ENCODE measurements at regions of chr12 and their contacts with region 1.

Region 1: GRCh38 chr12:113048716-113049127 is 7.8 kb upstream of the DTX1 start:
- DNase-seq: peak in 41 of 42 donors; percentile 29 to 91 (median 73)

Region 2: GRCh38 chr12:112599871-112600270 is 448.9 kb before region 1 on chr12:
- intact Hi-C with region 1: no loop called
- DNase-seq: peak in 33 of 42 donors; percentile 9 to 82 (median 35)

Region 3: DNA sequence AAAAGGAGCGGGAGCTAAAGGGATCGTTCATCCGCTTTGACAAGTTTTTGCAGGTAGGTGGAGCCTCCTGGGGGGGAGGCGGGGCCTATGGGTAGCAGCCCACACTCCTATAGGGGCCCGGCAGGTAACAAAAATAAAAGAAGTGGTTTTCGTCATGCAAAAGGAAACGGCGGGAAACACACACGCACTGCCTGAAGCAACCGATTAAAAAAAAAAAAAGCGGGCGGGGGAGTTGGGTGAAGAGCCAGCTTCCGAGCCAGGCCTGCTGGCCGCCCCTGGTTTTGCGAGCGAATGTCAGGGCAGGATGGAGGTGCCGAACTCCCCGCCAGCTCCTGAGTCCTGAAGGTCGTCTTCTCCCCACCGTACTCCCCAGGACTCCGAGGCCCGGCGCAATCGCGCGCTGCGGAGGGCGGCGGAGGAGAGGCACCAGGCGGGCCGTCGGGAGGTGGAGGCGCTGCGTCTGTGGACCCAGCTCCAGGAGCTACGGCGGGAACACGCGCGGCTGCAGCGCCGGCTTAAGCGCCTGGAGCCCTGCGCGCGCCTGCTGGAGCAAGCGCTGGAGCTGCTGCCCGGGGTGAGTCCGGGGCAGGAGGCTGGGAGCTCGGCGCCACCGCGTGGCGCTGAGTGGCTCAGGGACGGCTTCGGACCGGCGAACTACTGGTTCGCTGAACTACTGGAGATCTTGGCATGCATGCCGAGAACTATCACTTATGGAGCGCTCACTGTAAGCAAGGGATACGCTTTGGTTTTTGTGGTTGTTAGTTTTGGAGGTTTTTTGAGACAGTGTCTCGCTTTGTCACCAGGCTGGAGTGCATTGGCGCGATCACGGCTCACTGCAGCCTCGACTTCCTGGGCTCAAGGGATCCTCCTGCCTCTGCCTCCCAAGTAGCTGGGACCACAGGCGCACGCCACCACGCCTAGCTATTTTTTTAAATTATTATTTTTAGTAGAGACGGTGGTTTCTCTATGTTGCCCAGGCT is 104.4 kb after region 1 on chr12:
- intact Hi-C with region 1: loop called (anchors 2 kb)
- DNase-seq: peak; percentile 61 to 90 (median 81)

Region 4: DNA sequence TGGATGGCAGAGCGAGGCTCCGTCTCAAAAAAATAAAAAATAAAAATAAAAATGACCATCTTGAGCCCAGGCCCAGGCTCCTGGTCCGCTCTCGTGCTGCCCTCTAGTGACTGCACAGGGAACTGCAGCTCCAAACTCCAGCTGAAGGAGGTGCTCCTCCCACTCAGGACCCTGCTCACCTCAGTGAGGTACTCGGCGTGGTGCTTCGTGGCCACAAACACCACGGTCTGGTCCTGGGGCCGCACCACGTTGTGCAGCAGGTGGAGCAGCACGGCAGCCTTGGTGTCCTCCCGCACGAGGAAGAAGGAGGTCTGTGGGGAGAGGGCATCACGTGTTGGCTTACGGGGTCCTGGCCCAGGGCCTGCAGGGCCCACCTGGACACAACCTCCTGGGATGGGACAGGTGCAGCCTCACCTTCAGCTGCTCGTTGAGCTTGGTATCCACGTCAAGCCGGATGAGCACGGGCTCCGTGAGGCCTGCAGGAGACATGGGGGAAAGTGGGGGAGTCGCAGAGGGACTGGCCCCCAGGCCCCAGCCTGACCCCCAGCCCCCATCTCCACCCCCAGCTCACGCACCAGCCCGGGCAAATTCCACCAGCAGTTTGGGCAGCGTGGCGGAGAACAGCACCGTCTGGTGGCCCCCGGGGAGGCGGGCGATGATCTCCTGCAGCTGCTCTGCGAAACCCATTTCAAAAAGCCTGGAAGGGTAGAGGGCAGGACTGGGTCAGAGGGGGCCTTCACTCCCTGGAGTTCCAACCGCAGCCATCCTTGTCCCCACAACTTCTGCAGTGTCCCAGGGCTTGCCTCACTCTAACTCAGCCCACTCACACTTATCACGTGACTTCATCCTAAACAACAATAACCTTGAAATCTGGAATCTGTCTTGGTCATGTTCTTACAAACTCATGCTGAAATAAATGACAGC is 126.0 kb after region 1 on chr12:
- intact Hi-C with region 1: loop called (anchors 5 kb)
- DNase-seq: peak; percentile 19 to 94 (median 83)

Region 5: DNA sequence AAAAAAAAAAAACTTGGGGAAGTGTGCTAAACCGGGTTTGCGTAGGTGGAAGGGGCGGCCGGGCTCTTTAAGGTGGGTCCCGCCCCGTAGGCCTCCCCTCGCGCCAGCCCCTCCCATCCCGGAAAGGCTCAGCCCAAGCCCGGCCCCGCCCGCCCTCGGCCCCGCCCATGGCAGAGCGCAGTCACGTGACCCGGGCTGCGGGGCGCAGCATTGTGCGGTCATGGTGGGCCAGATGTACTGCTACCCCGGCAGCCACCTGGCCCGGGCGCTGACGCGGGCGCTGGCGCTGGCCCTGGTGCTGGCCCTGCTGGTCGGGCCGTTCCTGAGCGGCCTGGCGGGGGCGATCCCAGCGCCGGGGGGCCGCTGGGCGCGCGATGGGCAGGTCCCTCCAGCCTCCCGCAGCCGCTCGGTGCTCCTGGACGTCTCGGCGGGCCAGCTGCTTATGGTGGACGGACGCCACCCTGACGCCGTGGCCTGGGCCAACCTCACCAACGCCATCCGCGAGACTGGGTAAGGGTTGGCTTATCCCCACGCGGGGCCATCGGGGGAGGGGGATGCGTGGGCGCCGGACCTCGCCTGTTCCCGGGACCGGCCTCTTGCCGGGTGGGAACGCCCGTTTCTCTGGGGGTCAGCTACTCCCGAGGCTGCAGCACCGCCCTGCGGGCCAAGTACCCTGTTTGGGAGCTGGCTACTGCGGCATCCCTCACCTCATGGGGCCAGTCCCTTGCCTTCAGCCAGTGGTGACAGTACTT is 309.8 kb after region 1 on chr12 and contains the start of gene PLBD2:
- intact Hi-C with region 1: no loop called
- DNase-seq: peak; percentile 84 to 98 (median 96)